ENCODE measurements at regions of chr21 and their contacts with region 1.

Region 1: DNA sequence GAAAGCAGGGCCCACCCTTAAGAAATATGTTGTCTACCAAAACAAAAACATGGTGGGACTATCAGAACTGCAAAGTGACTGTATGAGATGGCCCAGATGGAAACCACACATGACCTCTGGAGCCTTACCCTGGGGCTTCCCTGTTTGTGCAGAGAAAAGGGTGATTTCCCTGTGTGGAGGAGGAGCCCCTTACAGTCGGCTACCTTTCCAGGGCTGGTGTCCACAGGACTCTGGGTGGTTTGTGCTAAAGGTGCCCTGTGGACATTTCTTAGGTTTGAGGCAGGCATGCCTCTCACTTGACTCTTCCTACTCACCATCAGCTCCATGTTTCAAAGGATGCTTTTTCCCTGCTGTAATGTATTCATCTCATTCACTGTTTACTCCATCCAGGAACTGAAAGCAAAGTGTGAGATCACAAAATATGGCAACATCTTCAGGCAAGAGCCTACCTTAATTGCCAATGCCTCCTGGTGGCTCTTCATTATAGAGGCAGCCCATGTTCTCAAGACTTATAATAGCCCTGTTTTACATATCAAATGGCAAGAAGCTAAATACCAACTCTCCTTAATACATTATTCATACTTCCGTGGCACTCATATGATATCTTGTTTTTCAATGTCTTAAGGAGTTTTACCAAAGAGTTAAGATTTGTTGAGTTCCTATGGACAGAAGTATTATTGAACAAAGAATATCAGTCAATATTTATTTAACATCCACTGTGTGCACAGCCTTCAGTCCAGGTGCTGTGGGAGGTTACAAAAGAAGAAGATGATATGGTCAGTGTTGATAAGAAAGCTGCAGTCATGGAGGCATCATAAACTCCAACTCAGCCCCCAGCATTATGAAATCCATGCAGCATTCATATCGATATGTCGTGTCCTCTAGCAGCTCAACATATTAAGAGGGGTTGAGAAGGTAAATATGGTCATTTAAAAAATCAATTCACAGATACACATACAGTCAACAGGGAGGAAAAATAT is 15.5 kb upstream of the TFF3 start:
- DNase-seq: no peak
- H3K4me3 ChIP-seq: no peak overlapping the region
- H3K27ac ChIP-seq: no peak overlapping the region
- H3K4me1 ChIP-seq: no peaks in the 10 kb centered on the region
- H3K27me3 ChIP-seq: no peaks in the 10 kb centered on the region
- CTCF ChIP-seq: no peak
- POLR2A ChIP-seq: no peak

Region 2: DNA sequence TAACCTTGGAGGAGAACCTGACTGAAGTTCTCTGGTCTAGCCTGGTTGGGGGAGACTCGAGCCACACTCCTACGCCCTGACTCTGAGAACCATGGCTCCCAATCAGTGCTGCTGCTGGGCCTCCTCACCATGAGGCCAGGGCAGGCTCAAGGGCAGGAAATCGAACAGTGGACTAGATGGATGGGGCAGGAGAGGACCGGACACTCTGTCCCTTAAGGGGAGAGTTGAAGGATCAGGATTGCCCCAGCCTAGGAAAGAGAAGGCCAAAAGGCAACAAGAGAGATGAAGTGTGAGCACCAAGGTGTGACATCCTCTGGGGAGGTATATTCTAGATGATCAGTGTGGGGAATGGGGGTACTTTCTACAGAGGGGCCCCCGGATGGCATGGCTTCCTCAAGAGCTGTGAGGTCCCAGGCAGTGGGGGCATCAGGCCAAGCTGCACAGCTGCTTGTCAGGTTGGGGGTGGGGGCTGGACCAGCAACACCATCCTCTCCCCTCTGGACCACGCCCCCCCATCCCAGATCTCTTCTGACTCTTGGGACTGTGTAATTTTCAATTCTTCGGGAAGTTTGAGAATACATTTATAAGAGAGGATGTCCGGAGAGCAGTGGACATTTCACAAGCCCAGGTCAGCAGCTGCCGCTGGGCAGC is 870.7 kb before region 1 on chr21:
- intact Hi-C with region 1: loop called (anchors 5 kb)
- DNase-seq: no peak
- H3K4me3 ChIP-seq: no peak overlapping the region
- H3K27ac ChIP-seq: no peak overlapping the region
- H3K4me1 ChIP-seq: no peaks in the 10 kb centered on the region
- H3K27me3 ChIP-seq: no peaks in the 10 kb centered on the region
- CTCF ChIP-seq: no peak
- POLR2A ChIP-seq: no peak

Region 3: GRCh38 chr21:42403611-42404231 is 73.1 kb after region 1 on chr21 and contains the start of gene UBASH3A:
- intact Hi-C with region 1: loop called (anchors 2 kb)
- DNase-seq: no peak
- H3K4me3 ChIP-seq: no peak within 1 kb of the TSS
- H3K27ac ChIP-seq: no peak within 1 kb of the TSS
- H3K4me1 ChIP-seq: no peaks in the 10 kb centered on the region
- H3K27me3 ChIP-seq: no peaks in the 10 kb centered on the region
- CTCF ChIP-seq: no peak
- POLR2A ChIP-seq: no peak
- total RNA-seq, gene UBASH3A: 0.32 to 1.5 (median 0.66) TPM